ENCODE measurements at regions of chr10 and their contacts with region 1.

Region 1: GRCh38 chr10:974038-974784 is 14.0 kb upstream of the GTPBP4 start:
- DNase-seq: peak; percentile 70
- ATAC-seq: peak; percentile 77
- H3K4me3 ChIP-seq: no peak overlapping the region
- H3K27ac ChIP-seq: peak overlapping the region; percentile 41
- H3K4me1 ChIP-seq: peaks cover 19% of the 10 kb centered on the region
- H3K27me3 ChIP-seq: no peaks in the 10 kb centered on the region
- CTCF ChIP-seq: no peak
- EP300 ChIP-seq: no peak
- POLR2A ChIP-seq: no peak
- RAD21 ChIP-seq: no peak

Region 2: DNA sequence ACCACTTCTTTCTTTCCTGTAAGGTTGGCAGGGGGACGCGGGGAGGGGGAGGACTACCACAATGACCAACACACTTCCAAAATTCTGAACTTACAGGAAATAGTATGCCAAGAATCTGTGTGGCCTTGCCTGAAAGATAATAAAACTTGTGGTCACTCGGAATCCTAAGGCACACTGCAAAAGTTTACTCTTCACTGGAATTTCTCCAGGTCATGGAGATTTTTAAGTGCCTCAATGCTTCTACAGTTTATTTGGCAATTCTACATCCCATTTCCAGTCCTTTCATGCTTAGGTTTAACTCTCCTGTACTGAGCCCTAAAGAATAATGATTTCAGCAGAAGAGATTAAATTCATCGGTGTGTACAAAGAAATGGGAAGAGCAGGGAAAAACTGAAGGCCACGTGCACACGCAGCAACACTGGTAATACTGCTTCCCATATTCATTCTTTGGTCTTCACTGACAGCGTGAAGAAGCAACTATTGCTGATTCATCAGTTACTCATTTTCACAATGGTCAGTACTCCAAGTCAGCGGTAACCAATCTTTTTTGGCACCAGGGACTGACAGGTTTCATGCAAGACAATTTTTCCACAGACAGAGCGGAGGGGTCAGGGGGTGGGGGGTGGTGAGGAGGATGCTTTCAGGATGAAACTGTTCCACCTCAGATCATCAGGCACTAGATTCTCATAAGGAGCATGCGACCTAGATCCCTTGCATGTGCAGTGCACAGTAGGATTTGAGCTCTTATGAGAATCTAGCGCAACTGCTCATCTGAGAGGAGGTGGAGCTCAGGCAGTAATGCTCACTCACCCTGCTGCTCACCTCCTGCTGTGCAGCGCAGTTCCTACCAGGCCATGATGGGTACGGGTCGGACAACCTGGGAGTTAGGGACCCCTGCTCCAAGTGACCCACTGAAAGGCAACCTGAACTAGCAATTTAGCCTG is 52.5 kb before region 1 on chr10:
- CTCF ChIA-PET with region 1: no interaction called
- POLR2A ChIA-PET with region 1: no interaction called
- RAD21 ChIA-PET with region 1: no interaction called
- SMC1A ChIA-PET with region 1: no interaction called
- in situ Hi-C with region 1: no loop called
- intact Hi-C with region 1: no loop called
- DNase-seq: no peak
- ATAC-seq: no peak
- H3K4me3 ChIP-seq: no peak overlapping the region
- H3K27ac ChIP-seq: no peak overlapping the region
- H3K4me1 ChIP-seq: no peaks in the 10 kb centered on the region
- H3K27me3 ChIP-seq: no peaks in the 10 kb centered on the region
- CTCF ChIP-seq: no peak
- EP300 ChIP-seq: no peak
- POLR2A ChIP-seq: no peak
- RAD21 ChIP-seq: no peak

Region 3: DNA sequence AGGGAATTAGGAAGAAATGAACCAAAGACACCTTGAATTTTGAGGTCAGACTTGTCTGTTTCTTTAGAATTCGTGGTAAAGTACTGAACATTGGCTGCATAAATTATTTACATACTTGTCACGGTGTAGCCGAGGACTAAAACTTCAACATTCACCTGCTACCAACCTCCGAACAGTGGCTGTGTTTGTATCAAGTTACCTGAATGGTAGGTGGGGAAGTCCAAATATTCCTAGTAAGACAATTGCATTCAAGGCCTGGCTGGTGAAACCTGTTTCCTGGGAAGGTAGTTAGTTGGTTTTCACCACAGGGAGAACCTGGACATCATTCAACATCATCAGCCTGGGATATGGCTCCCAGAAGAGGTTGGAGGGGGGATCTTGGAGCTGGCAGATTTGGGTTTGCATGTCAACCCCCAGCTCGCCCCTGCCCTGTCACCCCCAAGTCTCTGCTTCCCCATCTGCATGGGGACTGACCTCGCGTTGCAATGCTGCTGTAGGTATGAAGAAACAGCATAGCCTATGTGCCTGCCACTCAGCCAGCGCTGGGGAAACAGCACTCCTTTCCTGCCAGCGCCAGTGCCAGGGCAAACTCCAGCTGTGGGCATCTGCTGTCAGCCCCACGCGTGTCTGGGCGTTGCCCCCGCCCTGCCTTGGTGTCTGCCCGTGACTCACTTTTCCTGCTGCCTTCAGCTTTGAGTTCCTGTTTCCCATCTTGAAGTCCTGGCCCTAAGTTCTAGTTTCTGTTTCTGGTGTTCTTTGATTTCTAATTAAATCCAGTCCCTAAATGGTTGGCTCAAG is 30.0 kb before region 1 on chr10:
- CTCF ChIA-PET with region 1: no interaction called
- POLR2A ChIA-PET with region 1: no interaction called
- RAD21 ChIA-PET with region 1: interaction called, 3 read pairs
- SMC1A ChIA-PET with region 1: no interaction called
- in situ Hi-C with region 1: no loop called
- intact Hi-C with region 1: loop called (anchors 1 kb)
- DNase-seq: no peak
- ATAC-seq: peak; percentile 77
- H3K4me3 ChIP-seq: peak overlapping the region; percentile 9; the same call in 1 of the 2 replicates
- H3K27ac ChIP-seq: peak overlapping the region; percentile 39
- H3K4me1 ChIP-seq: peaks cover 17% of the 10 kb centered on the region
- H3K27me3 ChIP-seq: no peaks in the 10 kb centered on the region
- CTCF ChIP-seq: no peak
- EP300 ChIP-seq: no peak
- POLR2A ChIP-seq: peak; percentile 27; the same call in 1 of the 2 replicates
- RAD21 ChIP-seq: no peak

Region 4: GRCh38 chr10:987870-988666 is 13.9 kb after region 1 on chr10 and contains the start of gene GTPBP4:
- CTCF ChIA-PET with region 1: interaction called, 6 read pairs
- POLR2A ChIA-PET with region 1: interaction called, 23 read pairs
- RAD21 ChIA-PET with region 1: interaction called, 8 read pairs
- SMC1A ChIA-PET with region 1: interaction called, 25 read pairs
- in situ Hi-C with region 1: no loop called
- intact Hi-C with region 1: loop called (anchors 1 kb)
- DNase-seq: peak; percentile 86
- ATAC-seq: peak; percentile 96
- H3K4me3 ChIP-seq: peak within 1 kb of the TSS; percentile 75
- H3K27ac ChIP-seq: peak within 1 kb of the TSS; percentile 92
- H3K4me1 ChIP-seq: peaks cover 14% of the 10 kb centered on the region
- H3K27me3 ChIP-seq: no peaks in the 10 kb centered on the region
- CTCF ChIP-seq: peak; percentile 29 to 69 (median 37); a peak in 4 of 6 replicates
- EP300 ChIP-seq: no peak
- POLR2A ChIP-seq: peak; percentile 88
- RAD21 ChIP-seq: no peak
- polyA plus RNA-seq, gene GTPBP4: 60.3 to 68.0 TPM

Region 5: GRCh38 chr10:1043532-1043995 is 69.4 kb after region 1 on chr10:
- CTCF ChIA-PET with region 1: no interaction called
- POLR2A ChIA-PET with region 1: interaction called, 5 read pairs
- RAD21 ChIA-PET with region 1: interaction called, 3 read pairs
- SMC1A ChIA-PET with region 1: interaction called, 4 read pairs
- in situ Hi-C with region 1: no loop called
- intact Hi-C with region 1: loop called (anchors 2 kb)
- DNase-seq: peak; percentile 72
- ATAC-seq: peak; percentile 72
- H3K4me3 ChIP-seq: peak overlapping the region; percentile 69
- H3K27ac ChIP-seq: peak overlapping the region; percentile 84
- H3K4me1 ChIP-seq: peaks cover 5% of the 10 kb centered on the region
- H3K27me3 ChIP-seq: no peaks in the 10 kb centered on the region
- CTCF ChIP-seq: no peak
- EP300 ChIP-seq: no peak
- POLR2A ChIP-seq: no peak
- RAD21 ChIP-seq: no peak